GM10248 (cell line): ENCODE measurements at regions of chr2 and their contacts with region 1.

Region 1: GRCh38 chr2:21317131-21317530 is 193.4 kb downstream of the TDRD15 start:
- DNase-seq: peak; percentile 45
- CTCF ChIP-seq: peak; percentile 59

Region 2: DNA sequence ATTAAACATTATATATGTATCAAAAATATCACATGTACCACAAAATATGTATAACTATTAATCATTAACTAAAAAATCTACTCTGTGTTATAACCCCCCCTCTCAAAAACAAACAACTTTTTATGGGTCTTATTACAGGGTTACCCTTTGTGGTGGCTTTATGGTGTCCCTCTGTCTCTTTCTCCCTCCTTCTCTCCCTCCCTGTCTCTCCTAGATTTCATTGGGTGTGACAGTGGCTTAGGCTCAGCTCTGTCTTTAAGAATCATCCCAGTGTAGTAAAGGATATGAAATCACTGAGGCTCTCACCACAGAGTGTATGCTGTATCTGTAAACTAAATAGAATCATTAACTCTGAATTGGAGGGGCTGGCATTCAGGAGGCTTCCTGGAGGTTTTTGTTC is 99.7 kb before region 1 on chr2:
- CTCF ChIA-PET with region 1: no interaction called
- POLR2A ChIA-PET with region 1: no interaction called
- DNase-seq: no peak
- CTCF ChIP-seq: no peak

Region 3: DNA sequence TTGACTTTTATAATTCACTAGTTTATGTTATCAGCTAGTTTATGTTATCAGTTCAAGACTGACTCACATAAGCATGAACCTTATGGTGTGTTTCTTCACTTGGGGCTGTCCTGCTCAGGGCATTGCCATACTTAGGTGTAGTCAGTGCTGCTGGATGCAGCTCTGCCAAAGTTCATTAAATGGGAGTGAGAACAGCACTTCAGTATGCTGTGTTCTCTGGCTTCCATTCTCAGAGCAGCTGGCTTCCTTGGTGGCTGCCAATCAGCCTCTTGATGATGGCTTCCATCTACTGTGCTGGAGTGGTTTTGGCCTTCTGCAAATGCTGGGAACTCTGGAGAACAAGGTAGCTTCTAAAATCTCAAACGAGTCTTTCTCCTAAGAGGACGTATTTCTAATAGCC is 22.7 kb before region 1 on chr2:
- CTCF ChIA-PET with region 1: interaction called, 14 read pairs
- POLR2A ChIA-PET with region 1: no interaction called
- DNase-seq: no peak
- CTCF ChIP-seq: no peak

Region 4: DNA sequence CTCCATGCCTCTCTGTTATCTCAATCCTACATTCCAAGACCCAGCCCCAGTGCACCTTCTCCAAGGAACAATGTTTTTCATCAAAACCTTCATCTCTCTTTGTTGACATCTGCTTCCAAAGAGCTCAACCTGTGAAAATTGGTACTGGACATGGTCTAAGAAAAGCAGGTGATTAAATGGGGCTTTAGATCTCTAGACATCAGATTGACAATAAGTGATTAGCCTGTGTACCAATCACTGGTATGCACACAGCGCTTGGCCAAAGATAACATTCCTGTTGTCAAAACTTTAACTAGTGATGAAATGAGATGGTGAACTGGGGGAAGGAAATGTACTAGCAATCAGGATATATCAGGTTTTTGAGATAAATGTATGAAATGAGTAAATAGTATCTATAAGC is 10.1 kb before region 1 on chr2:
- CTCF ChIA-PET with region 1: interaction called, 11 read pairs
- POLR2A ChIA-PET with region 1: no interaction called
- DNase-seq: no peak
- CTCF ChIP-seq: no peak

Region 5: DNA sequence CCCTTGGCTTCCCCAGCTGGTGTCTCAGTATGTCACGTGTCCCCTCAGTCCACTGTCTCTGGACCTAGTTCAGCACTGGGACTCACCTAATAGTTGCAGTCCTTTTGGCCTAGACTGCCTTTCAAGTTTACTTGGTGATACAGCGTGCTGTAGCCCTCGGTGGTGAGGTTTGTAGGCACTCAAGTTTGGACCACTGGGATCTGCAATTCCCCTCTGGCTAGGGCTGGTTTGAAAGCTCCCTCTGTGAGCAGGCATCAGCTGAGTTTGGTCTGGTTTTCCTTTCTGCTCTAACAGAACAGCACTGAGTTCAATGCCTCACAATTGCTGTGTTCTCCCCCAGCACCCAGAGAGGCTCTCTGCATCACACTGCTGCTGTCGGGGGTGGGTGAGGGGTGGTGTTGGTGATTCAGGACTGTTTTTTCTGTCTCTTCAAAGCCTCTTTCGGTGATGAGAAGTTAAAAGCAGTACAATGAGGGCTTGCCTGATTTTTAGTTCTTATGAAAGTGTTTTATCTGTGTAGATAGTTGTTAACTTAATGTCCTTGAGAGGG is 300.8 kb after region 1 on chr2:
- CTCF ChIA-PET with region 1: no interaction called
- POLR2A ChIA-PET with region 1: no interaction called
- DNase-seq: no peak
- CTCF ChIP-seq: no peak